Activated CD4-positive, alpha-beta memory T cell treated with anti-CD3 and anti-CD28 coated beads, Interleukin-2, amount 10 ng/mL, durations not matched to agents 7 days and 5 days (primary cell): ENCODE measurements at regions of chr17 and their contacts with region 1.

Region 1: DNA sequence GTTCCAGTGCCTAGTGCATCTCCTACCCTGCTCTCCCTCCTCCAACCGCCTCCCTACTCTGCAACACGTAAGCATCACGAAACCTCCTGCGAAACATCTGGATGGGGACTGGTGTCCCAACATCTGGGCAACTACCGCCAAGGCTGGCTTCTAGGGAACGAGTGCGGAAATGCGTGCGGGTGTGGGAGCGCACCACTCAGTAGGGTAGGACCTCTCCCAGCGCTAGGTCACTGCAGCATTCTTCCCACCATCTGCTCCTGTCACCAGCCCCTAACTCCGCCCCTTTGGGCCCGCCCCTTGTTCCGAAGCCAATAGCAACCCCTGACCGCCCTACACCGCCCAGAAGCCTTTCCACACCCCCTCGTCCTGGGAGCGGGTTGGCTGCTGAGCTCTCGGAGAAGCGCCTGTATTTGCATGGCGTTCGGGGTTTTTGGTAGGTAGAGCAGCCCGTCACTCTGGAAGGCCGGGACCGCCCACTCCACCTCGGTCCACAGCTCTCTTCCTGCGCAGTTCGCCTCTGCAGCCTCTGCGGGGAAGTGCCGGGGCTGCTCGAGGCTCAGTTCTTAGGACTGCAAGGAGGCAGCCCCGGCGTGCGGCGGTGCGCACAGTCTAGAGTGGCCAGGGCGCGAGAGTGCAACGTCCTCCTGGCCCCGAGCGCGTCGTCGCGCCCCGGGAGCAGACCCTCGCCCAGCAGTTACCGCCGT is at the start of gene HS3ST3B1:
- DNase-seq: peak; percentile 99
- H3K4me3 Mint-ChIP-seq: peak within 1 kb of the TSS; percentile 84
- H3K27ac Mint-ChIP-seq: peak within 1 kb of the TSS; percentile 97
- H3K4me1 Mint-ChIP-seq: peaks cover 61% of the 10 kb centered on the region
- H3K27me3 Mint-ChIP-seq: peaks cover 28% of the 10 kb centered on the region
- total RNA-seq, gene HS3ST3B1: 28.9 to 29.9 TPM

Region 2: DNA sequence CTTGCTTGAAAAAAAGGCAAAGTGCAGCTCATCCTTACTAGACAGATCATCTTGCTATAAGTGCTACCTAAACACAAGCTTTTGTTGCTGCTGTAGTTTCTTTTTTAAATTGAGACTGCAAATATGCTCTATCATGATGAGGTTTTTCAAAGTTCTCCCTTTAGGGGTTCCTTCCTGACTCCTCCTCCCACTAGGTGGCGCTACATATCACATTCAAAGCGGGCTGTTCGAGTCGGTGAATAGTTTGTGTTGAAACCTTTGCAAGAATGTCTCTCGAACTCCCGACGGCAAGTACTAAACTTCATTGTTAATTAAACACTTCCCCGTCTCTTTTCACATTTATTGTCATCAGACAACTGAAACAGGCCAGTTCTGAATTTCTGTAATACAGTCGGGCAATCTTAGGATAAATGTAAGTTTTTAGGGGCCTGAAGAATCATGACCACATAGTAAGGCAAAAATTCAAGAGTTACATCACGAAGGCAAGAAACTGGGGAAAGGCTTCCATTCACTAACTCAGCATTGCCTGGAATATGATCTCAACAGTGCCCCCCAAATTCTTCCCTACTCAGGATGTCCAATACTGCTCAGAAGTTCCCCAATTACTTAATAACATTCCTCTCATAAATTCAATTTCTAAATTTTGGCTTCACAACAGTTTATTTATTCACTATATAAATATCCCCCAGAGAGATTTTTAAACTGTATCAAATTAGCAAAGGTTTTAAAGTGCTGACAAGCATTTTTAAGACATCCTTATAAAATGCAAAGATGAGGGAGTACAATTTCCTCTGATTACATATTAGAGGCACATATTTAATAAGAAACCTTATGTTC is 705.7 kb before region 1 on chr17:
- CTCF ChIA-PET with region 1: interaction called, 54 read pairs
- POLR2A ChIA-PET with region 1: interaction called, 11 read pairs
- DNase-seq: peak; percentile 81
- H3K4me3 Mint-ChIP-seq: no peak overlapping the region
- H3K27ac Mint-ChIP-seq: no peak overlapping the region
- H3K4me1 Mint-ChIP-seq: peaks cover 3% of the 10 kb centered on the region
- H3K27me3 Mint-ChIP-seq: peaks cover 35% of the 10 kb centered on the region

Region 3: GRCh38 chr17:14092808-14093207 is 207.9 kb before region 1 on chr17:
- CTCF ChIA-PET with region 1: interaction called, 3 read pairs
- POLR2A ChIA-PET with region 1: interaction called, 15 read pairs
- DNase-seq: no peak
- H3K4me3 Mint-ChIP-seq: no peak overlapping the region
- H3K27ac Mint-ChIP-seq: no peak overlapping the region
- H3K4me1 Mint-ChIP-seq: peaks cover 41% of the 10 kb centered on the region
- H3K27me3 Mint-ChIP-seq: no peaks in the 10 kb centered on the region

Region 4: DNA sequence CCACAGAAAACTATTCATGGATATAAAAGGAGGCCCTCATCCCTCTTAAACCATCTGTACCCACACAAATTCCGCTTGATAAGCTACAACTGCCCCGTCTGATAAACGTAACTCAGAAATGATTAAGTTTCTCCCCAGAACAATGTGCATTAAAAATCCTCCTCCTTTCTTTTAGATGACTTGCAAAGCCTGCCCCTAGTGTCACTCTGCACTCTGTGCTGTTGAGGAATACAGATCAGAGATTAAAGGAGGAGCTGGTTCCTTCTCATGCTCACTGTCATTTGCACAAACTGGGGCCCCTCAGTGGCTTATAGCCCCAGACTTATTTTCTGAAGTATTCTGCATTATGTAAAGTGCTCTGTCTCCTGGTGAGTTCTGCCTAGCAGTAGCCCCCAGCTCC is 97.3 kb before region 1 on chr17:
- CTCF ChIA-PET with region 1: interaction called, 74 read pairs
- POLR2A ChIA-PET with region 1: interaction called, 194 read pairs
- DNase-seq: peak; percentile 55
- H3K4me3 Mint-ChIP-seq: no peak overlapping the region
- H3K27ac Mint-ChIP-seq: peak overlapping the region; percentile 98
- H3K4me1 Mint-ChIP-seq: peaks cover 95% of the 10 kb centered on the region
- H3K27me3 Mint-ChIP-seq: no peaks in the 10 kb centered on the region

Region 5: GRCh38 chr17:14334276-14334840 is 33.6 kb after region 1 on chr17:
- CTCF ChIA-PET with region 1: no interaction called
- POLR2A ChIA-PET with region 1: interaction called, 10 read pairs
- DNase-seq: no peak
- H3K4me3 Mint-ChIP-seq: no peak overlapping the region
- H3K27ac Mint-ChIP-seq: peak overlapping the region; percentile 45
- H3K4me1 Mint-ChIP-seq: peaks cover 80% of the 10 kb centered on the region
- H3K27me3 Mint-ChIP-seq: no peaks in the 10 kb centered on the region